ENCODE measurements at regions of chr5 and their contacts with region 1.

Region 1: GRCh38 chr5:154179846-154180710 is 10.5 kb upstream of the GALNT10 start:
- DNase-seq: peak; percentile 62
- H3K4me3 ChIP-seq: no peak overlapping the region
- H3K27ac ChIP-seq: no peak overlapping the region
- H3K4me1 ChIP-seq: no peaks in the 10 kb centered on the region
- H3K27me3 ChIP-seq: no peaks in the 10 kb centered on the region
- CTCF ChIP-seq: peak; percentile 52 to 82 (median 79)
- POLR2A ChIP-seq: no peak

Region 2: DNA sequence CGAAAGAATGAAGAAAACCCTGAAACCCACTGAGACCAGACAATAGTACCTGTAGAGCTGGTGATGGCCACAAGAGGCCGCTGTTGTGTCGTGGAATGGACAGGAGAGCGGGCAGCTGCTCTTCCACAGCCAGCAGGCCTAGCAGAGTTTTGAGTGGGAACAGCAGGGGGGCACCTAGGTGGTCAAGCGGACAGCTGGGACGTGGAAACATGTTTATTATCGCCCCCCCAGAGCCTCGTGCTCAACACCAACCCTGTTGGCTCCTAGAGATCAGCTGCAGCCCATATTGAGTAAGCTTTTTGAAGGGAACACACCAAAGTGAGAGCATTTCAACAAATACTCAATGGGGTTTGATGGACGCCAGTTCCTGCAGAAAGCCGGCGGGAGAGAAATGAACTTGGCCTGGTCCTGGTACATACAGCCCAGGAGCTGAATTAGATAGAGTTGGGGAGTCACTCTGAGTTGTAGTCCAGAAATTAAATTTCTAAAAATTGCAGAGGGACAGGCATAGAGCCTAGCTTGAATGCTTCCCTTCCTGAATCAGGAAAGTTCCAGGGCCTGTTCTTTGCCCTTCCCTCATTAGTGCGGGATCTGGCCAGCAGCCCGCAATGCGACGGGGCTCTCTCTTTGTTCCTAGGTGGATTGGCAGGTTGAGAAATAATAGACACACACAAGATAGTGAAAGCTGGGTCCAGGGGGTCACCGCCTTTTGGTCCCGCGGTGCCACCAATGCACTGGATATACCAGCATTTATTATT is 107.5 kb before region 1 on chr5:
- intact Hi-C with region 1: loop called (anchors 5 kb)
- DNase-seq: peak; percentile 89
- H3K4me3 ChIP-seq: no peak overlapping the region
- H3K27ac ChIP-seq: no peak overlapping the region
- H3K4me1 ChIP-seq: no peaks in the 10 kb centered on the region
- H3K27me3 ChIP-seq: no peaks in the 10 kb centered on the region
- CTCF ChIP-seq: peak; percentile 92 to 94 (median 93)
- POLR2A ChIP-seq: no peak